ENCODE measurements at regions of chr2 and their contacts with region 1.

Region 1: GRCh38 chr2:164538240-164538866 is 82.9 kb downstream of the GRB14 start:
- DNase-seq: no peak
- H3K4me3 ChIP-seq: no peak overlapping the region
- H3K27ac ChIP-seq: no peak overlapping the region
- H3K4me1 ChIP-seq: no peaks in the 10 kb centered on the region; a peak in 1 of 7 replicates
- H3K27me3 ChIP-seq: no peaks in the 10 kb centered on the region
- CTCF ChIP-seq: peak in 2 of 3 experiments; percentile 68 to 70; a peak in 3 of 4 replicates
- EP300 ChIP-seq: no peak
- POLR2A ChIP-seq: no peak
- RAD21 ChIP-seq: peak; percentile 77 to 81

Region 2: DNA sequence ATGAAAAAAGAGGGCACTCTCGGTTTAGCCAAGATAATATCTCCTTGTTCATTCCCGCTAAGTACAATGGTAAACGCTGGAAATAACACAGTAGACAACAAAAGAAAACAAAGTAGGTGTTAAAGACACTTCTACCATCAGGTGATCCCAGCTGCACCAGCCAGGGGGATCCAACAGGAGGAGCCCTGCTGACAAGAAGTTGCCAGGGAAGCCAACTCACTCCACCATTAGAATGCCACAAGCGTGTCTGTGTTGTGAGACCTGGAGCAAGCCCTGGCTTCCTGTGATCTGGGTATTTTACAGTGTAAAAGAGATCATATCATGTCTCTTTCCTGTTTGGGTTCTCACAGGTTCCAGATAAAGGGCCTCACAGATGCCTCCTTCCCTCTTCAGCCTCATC is 34.1 kb before region 1 on chr2:
- CTCF ChIA-PET with region 1: interaction called, 10 read pairs
- POLR2A ChIA-PET with region 1: no interaction called
- DNase-seq: peak in 1 of 2 experiments; percentile 55
- H3K4me3 ChIP-seq: no peak overlapping the region
- H3K27ac ChIP-seq: no peak overlapping the region
- H3K4me1 ChIP-seq: no peaks in the 10 kb centered on the region; a peak in 1 of 7 replicates
- H3K27me3 ChIP-seq: no peaks in the 10 kb centered on the region
- CTCF ChIP-seq: peak; percentile 71 to 83 (median 79)
- EP300 ChIP-seq: no peak
- POLR2A ChIP-seq: no peak
- RAD21 ChIP-seq: peak; percentile 54 to 65

Region 3: GRCh38 chr2:164514231-164514907 is 24.0 kb before region 1 on chr2:
- CTCF ChIA-PET with region 1: interaction called, 13 read pairs
- POLR2A ChIA-PET with region 1: no interaction called
- DNase-seq: no peak
- H3K4me3 ChIP-seq: no peak overlapping the region
- H3K27ac ChIP-seq: no peak overlapping the region
- H3K4me1 ChIP-seq: peaks cover 0 to 3% (median 0%) of the 10 kb centered on the region in 4 experiments; a peak in 1 of 7 replicates
- H3K27me3 ChIP-seq: no peaks in the 10 kb centered on the region
- CTCF ChIP-seq: no peak
- EP300 ChIP-seq: no peak
- POLR2A ChIP-seq: no peak
- RAD21 ChIP-seq: no peak

Region 4: GRCh38 chr2:164523726-164524125 is 14.6 kb before region 1 on chr2:
- CTCF ChIA-PET with region 1: interaction called, 14 read pairs
- POLR2A ChIA-PET with region 1: no interaction called
- DNase-seq: no peak
- H3K4me3 ChIP-seq: no peak overlapping the region
- H3K27ac ChIP-seq: no peak overlapping the region
- H3K4me1 ChIP-seq: no peaks in the 10 kb centered on the region
- H3K27me3 ChIP-seq: no peaks in the 10 kb centered on the region
- CTCF ChIP-seq: no peak
- EP300 ChIP-seq: no peak
- POLR2A ChIP-seq: no peak
- RAD21 ChIP-seq: no peak